ENCODE measurements at regions of chr11 and their contacts with region 1.

Region 1: GRCh38 chr11:45110562-45110961 is 35.9 kb upstream of the PRDM11 start:
- DNase-seq: peak in 2 of 4 donors; percentile 56 to 79
- ATAC-seq: peak; percentile 93
- H3K4me3 ChIP-seq: no peak overlapping the region
- H3K27ac ChIP-seq: no peak overlapping the region
- H3K4me1 ChIP-seq: no peaks in the 10 kb centered on the region
- H3K27me3 ChIP-seq: peaks cover 0 to 16% of the 10 kb centered on the region in 2 donors
- CTCF ChIP-seq: peak; percentile 75 to 80

Region 2: DNA sequence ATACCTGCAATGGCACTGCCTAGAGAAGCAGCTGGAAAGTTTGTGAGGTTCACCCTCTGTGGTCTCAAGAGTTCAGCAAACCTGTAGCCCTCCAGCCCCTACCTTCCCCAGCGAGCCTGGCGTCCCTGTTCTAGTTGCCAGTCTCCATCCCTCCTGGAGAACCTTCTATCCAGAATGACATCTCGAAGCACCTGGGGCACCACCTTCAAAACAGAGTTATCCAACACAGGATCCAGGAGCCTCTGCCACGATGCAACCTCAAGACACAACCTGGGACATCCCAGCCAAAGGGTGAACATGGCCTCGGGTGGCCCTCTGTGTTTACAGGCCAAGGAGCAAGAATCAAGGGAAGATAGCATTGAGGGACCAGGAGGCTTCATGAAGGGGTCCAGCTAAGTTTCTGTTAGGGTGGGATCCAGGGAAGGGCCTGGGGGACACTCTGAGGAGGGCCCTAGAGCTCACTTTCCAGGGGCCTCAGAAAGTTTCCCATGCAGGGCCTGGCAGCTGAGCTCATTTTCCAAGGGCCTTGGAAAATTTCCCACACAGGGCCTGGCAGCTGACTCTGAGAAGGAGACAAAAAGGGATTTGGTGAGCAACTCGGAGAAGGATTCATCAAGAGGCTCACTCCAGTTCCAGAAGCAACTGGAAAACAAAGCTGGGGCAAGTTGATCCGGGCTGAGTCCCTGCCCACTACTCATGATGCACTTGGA is 212.5 kb after region 1 on chr11:
- intact Hi-C with region 1: loop called in 1 of 2 experiments (anchors 10 kb)
- DNase-seq: no peak
- ATAC-seq: no peak
- H3K4me3 ChIP-seq: no peak overlapping the region
- H3K27ac ChIP-seq: no peak overlapping the region
- H3K4me1 ChIP-seq: no peaks in the 10 kb centered on the region
- H3K27me3 ChIP-seq: peaks cover 0 to 2% of the 10 kb centered on the region in 2 donors
- CTCF ChIP-seq: no peak

Region 3: DNA sequence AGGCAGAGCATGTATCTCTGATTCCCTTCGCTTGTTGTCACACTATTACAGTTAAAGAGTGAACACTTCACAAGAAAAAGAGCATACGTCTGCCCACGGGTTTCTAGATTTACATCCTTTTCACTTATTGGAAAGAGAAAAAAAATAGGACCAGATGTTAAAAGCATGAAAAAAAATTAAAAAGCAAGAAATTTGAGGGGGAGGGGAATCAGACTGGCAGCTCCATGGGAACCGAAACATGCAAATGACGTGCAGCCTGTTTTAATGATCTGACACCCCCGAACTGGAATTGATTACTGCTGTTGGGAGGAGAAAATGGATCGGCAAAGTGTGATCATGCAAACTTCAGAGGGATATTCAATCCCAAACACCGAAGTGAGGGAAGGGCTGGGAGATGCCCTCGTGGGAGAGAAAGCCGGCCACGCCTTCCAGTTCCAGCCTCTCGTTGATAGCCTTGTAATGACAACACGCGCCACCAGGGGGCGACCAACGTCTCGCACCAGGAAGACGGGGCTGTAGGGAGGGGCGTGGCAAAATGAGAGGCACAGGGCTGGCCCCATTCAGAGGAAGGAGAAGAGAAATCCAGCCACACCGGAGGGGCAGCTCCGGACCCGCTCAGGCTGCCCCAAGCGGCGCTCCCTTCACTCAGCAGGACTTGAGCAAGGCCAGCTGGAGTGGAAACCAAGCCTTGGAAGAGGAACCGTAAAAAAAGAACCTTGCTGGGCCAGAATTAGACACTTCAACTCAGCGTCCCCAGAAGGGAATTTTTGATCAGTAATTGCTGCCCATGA is 229.4 kb after region 1 on chr11:
- intact Hi-C with region 1: loop called in 1 of 2 experiments (anchors 10 kb)
- DNase-seq: peak; percentile 86 to 98 (median 94)
- ATAC-seq: peak; percentile 99
- H3K4me3 ChIP-seq: peak overlapping the region in 1 of 2 donors; percentile 6
- H3K27ac ChIP-seq: no peak overlapping the region
- H3K4me1 ChIP-seq: peaks cover 0 to 8% of the 10 kb centered on the region in 2 donors
- H3K27me3 ChIP-seq: peaks cover 0 to 2% of the 10 kb centered on the region in 2 donors
- CTCF ChIP-seq: peak; percentile 95 to 97

Region 4: GRCh38 chr11:45405916-45406670 is 295.5 kb after region 1 on chr11:
- intact Hi-C with region 1: no loop called
- DNase-seq: peak in 1 of 4 donors; percentile 21
- ATAC-seq: no peak
- H3K4me3 ChIP-seq: no peak overlapping the region
- H3K27ac ChIP-seq: no peak overlapping the region
- H3K4me1 ChIP-seq: no peaks in the 10 kb centered on the region
- H3K27me3 ChIP-seq: peaks cover 0 to 28% of the 10 kb centered on the region in 2 donors
- CTCF ChIP-seq: peak in 1 of 2 donors; percentile 19

Region 5: GRCh38 chr11:45930031-45930794 is 819.7 kb after region 1 on chr11:
- intact Hi-C with region 1: no loop called
- DNase-seq: peak in 1 of 4 donors; percentile 61
- ATAC-seq: peak; percentile 60
- H3K4me3 ChIP-seq: no peak overlapping the region
- H3K27ac ChIP-seq: peak overlapping the region in 1 of 2 donors; percentile 23
- H3K4me1 ChIP-seq: peaks cover 0 to 22% of the 10 kb centered on the region in 2 donors
- H3K27me3 ChIP-seq: peaks cover 0 to 8% of the 10 kb centered on the region in 2 donors
- CTCF ChIP-seq: no peak

Measured in left lung (tissue), 14 donors.